Activated naive CD4-positive, alpha-beta T cell treated with anti-CD3 and anti-CD28 coated beads, Interleukin-2, amount 10 ng/mL, durations not matched to agents 7 days and 5 days (primary cell): ENCODE measurements at regions of chr19 and their contacts with region 1.

Region 1: DNA sequence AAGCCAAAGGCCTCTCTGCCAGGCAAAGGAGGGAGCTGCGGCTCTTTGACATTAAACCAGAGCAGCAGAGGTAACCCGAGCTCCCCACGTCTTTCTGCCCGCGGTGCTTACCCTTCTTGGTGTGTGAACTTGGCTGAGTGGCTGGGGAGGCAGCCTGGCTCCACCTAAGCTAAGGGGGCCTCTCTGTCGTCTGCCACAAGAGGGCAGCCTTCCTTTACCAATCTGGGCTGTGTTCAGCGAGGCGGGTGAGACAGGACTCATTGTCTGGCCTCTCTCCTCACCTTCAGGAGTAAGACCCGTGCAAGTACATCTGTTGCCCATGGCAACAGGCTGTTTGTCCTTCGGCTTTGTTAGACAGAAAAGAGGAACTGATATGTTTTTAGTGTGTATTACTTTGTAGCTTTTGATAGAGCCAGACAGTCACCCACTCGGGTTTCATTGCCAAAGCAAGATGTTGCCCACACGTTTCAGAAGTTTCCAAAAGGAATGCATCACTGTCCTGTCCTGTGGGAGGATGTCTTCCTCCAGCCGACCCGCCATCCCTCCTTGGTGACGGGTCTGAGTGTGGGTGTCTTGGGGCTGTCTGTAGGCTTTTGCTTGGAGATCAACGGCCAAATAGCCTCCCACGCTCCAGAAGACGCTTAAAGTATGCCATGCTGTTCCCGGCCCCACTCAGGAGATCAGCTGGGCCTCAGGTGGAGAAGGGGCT is 4.6 kb downstream of the POP4 start:
- DNase-seq: peak; percentile 91
- H3K4me3 Mint-ChIP-seq: no peak overlapping the region
- H3K27ac Mint-ChIP-seq: peak overlapping the region; percentile 46
- H3K4me1 Mint-ChIP-seq: peaks cover 26% of the 10 kb centered on the region
- H3K27me3 Mint-ChIP-seq: peaks cover 6% of the 10 kb centered on the region

Region 2: DNA sequence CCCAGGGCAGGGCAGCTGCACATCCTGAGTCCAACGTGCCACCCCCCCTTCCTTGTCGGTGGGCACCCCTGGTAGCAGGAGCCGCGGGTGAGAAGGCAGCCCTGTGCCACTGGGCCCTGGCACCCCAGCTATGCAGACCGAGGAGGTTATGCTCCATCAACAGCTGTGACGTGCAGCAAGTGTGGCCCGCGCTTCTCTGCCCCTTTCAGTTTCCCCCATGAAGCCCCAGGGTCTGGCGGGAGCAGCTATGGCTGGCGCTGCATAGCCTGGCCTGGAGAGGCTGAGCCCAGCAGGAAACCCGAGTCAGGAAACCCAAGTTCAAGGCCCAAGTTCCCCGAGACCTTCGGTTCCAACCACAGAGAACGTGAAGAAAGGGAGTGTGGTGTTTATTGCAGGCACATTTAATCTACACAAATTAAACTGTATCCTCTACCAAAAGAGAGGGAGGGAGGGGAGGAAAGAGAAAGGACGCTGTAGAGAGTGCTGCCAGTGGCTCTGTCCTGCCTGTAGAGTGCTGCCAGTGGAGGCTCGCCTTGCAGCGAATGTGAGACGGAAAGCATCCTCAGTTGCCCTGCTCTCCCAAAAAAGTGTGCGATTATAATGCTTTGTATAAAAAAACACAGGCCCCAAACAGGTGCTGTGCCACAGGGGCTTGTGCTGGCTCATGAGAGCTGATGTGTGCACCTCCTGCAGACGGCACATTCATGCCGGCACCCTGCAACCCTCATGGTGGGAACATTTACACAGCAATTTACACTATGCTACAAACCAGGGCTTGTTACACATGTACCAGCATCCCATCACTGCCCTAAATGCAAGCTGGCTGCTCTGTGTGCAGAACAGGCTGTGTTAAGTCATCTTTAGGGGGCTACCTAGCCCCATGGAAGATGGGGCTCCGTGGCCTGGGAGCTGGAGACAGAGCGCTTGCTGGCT is 11.7 kb after region 1 on chr19:
- CTCF ChIA-PET with region 1: interaction called, 48 read pairs
- DNase-seq: peak; percentile 48
- H3K4me3 Mint-ChIP-seq: peak overlapping the region; percentile 15
- H3K27ac Mint-ChIP-seq: peak overlapping the region; percentile 67
- H3K4me1 Mint-ChIP-seq: peaks cover 52% of the 10 kb centered on the region
- H3K27me3 Mint-ChIP-seq: peaks cover 24% of the 10 kb centered on the region

Region 3: GRCh38 chr19:29665215-29665825 is 54.6 kb after region 1 on chr19 and contains the start of gene PLEKHF1:
- CTCF ChIA-PET with region 1: interaction called, 58 read pairs
- DNase-seq: peak; percentile 91
- H3K4me3 Mint-ChIP-seq: peak within 1 kb of the TSS; percentile 92
- H3K27ac Mint-ChIP-seq: peak within 1 kb of the TSS; percentile 95
- H3K4me1 Mint-ChIP-seq: peaks cover 63% of the 10 kb centered on the region
- H3K27me3 Mint-ChIP-seq: peaks cover 12% of the 10 kb centered on the region

Region 4: GRCh38 chr19:29671393-29672160 is 60.9 kb after region 1 on chr19:
- CTCF ChIA-PET with region 1: interaction called, 58 read pairs
- DNase-seq: peak; percentile 89
- H3K4me3 Mint-ChIP-seq: peak overlapping the region; percentile 69
- H3K27ac Mint-ChIP-seq: peak overlapping the region; percentile 95
- H3K4me1 Mint-ChIP-seq: peaks cover 94% of the 10 kb centered on the region
- H3K27me3 Mint-ChIP-seq: no peaks in the 10 kb centered on the region

Region 5: GRCh38 chr19:29680447-29680846 is 69.7 kb after region 1 on chr19:
- CTCF ChIA-PET with region 1: interaction called, 10 read pairs
- DNase-seq: peak; percentile 89
- H3K4me3 Mint-ChIP-seq: peak overlapping the region; percentile 35
- H3K27ac Mint-ChIP-seq: peak overlapping the region; percentile 87
- H3K4me1 Mint-ChIP-seq: peaks cover 70% of the 10 kb centered on the region
- H3K27me3 Mint-ChIP-seq: peaks cover 3% of the 10 kb centered on the region

Region 6: DNA sequence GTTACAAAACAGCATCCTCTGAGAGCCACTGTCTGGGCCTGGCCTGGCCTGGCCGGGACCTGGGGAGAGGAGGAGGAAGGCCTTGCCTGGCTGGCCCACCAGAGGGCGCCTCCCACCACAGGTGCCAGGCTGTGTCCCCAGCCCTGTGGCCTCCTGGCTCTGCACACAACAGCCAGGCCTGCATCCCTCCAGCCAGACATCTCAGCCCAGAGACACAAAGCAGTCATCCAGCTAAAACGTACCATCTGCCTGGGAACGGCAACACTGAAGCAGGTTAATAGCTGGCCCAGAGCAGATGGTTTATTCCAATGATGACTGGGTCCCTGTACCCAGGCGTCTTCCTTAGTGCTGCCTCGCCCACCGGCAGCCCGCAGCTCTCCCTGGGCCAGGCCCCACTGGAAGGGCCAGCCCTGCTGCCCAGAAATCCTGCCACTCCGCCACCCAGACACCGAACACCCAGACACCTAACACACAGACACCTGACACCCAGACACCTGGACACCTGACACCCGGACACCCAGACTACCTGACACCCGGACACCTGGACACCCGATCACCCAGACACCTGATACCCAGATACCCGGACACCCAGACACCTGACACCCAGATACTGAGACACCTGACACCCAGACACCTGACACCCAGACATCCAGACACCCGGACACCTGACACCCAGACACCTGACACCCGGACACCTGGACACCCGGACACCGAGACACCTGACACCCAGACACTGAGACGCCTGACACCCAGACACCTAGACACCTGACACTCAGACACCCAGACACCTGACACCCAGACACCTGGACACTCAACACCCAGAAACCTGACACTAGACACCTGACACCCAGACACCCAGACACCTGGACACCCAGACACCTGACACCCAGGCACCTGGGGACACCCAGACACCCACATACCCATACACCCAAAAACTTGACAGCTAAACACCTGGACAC is 84.2 kb after region 1 on chr19:
- CTCF ChIA-PET with region 1: interaction called, 132 read pairs
- DNase-seq: peak; percentile 88
- H3K4me3 Mint-ChIP-seq: no peak overlapping the region
- H3K27ac Mint-ChIP-seq: peak overlapping the region; percentile 44
- H3K4me1 Mint-ChIP-seq: peaks cover 18% of the 10 kb centered on the region
- H3K27me3 Mint-ChIP-seq: no peaks in the 10 kb centered on the region

Region 7: GRCh38 chr19:29714953-29715700 is 104.4 kb after region 1 on chr19 and contains the start of gene C19orf12:
- CTCF ChIA-PET with region 1: interaction called, 142 read pairs
- DNase-seq: peak; percentile 68
- H3K4me3 Mint-ChIP-seq: peak within 1 kb of the TSS; percentile 88
- H3K27ac Mint-ChIP-seq: peak within 1 kb of the TSS; percentile 97
- H3K4me1 Mint-ChIP-seq: peaks cover 57% of the 10 kb centered on the region
- H3K27me3 Mint-ChIP-seq: peaks cover 4% of the 10 kb centered on the region